Tibial artery (tissue), 4 donors: ENCODE measurements at regions of chr18 and their contacts with region 1.

Region 1: DNA sequence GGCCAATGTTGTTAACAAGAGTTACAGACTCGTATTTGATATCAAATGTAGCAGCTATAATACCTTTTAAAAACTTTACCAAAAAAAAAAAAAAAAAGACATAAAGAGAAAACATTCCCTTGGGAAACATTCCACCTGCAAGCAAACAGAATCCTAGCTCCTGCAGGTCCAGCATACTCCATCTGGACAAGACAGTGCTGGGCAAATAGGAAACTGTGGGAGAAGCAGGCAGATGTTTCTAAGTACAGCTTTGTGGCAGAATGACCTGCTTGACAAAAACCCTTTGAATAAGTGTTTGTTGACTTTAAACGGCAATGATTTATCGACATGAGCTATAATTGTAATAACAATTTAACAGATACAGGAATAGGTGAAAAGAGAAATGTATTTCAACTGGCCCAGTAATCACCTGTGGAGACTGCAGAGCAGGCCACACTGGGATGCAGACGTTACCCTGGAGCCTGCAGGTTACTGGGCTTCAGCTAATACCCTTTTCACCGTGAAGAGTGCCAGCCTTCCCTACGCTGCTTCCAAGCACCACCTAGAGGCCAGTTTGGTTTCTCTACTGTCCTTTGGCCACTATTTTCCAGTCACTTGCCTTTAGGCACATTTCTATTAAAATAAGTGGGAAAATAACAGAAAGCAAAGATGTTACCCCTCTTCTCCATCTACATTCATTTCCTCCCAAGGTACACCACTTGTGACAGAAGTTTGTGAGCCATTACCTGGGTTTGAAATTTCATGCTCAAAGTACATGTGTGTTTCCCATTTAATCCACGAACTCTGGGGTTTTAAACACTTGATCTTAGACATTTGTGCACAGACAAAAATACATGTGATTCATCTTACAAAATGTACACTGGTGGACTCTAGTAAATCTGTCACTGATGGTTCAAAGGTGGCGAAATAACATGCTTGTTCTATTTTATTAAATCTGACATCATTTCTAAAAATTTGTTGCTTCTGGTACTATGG is 96.9 kb upstream of the ZNF397 start:
- DNase-seq: peak; percentile 40 to 69
- H3K4me3 ChIP-seq: no peak overlapping the region
- H3K27ac ChIP-seq: peak overlapping the region in 1 of 2 donors; percentile 10
- H3K4me1 ChIP-seq: peaks cover 0 to 14% (median 4%) of the 10 kb centered on the region in 4 donors
- H3K27me3 ChIP-seq: no peaks in the 10 kb centered on the region
- CTCF ChIP-seq: peak; percentile 79 to 80

Region 2: GRCh38 chr18:34867520-34867919 is 276.4 kb before region 1 on chr18:
- intact Hi-C with region 1: loop called (anchors 10 kb)
- DNase-seq: no peak
- H3K4me3 ChIP-seq: no peak overlapping the region
- H3K27ac ChIP-seq: peak overlapping the region; percentile 69 to 71
- H3K4me1 ChIP-seq: peaks cover 0 to 32% (median 14%) of the 10 kb centered on the region in 4 donors
- H3K27me3 ChIP-seq: no peaks in the 10 kb centered on the region
- CTCF ChIP-seq: peak; percentile 5 to 21

Region 3: GRCh38 chr18:35005963-35006577 is 137.8 kb before region 1 on chr18:
- intact Hi-C with region 1: loop called (anchors 5 kb)
- DNase-seq: no peak
- H3K4me3 ChIP-seq: no peak overlapping the region
- H3K27ac ChIP-seq: no peak overlapping the region
- H3K4me1 ChIP-seq: no peaks in the 10 kb centered on the region
- H3K27me3 ChIP-seq: no peaks in the 10 kb centered on the region
- CTCF ChIP-seq: peak; percentile 64 to 84